CD4-positive, alpha-beta T cell (primary cell): ENCODE measurements at regions of chr1 and their contacts with region 1.

Region 1: GRCh38 chr1:185670187-185670627 is 64.0 kb upstream of the HMCN1 start:
- DNase-seq: peak; percentile 40 to 78 (median 54)
- ATAC-seq: peak; percentile 77
- H3K4me3 ChIP-seq: no peak overlapping the region
- H3K4me3 Mint-ChIP-seq: no peak overlapping the region
- H3K27ac ChIP-seq: no peak overlapping the region
- H3K27ac Mint-ChIP-seq: peak overlapping the region; percentile 55
- H3K4me1 ChIP-seq: peaks cover 14% of the 10 kb centered on the region
- H3K4me1 Mint-ChIP-seq: peaks cover 47% of the 10 kb centered on the region
- H3K27me3 ChIP-seq: no peaks in the 10 kb centered on the region
- H3K27me3 Mint-ChIP-seq: no peaks in the 10 kb centered on the region
- CTCF ChIP-seq: peak; percentile 71

Region 2: DNA sequence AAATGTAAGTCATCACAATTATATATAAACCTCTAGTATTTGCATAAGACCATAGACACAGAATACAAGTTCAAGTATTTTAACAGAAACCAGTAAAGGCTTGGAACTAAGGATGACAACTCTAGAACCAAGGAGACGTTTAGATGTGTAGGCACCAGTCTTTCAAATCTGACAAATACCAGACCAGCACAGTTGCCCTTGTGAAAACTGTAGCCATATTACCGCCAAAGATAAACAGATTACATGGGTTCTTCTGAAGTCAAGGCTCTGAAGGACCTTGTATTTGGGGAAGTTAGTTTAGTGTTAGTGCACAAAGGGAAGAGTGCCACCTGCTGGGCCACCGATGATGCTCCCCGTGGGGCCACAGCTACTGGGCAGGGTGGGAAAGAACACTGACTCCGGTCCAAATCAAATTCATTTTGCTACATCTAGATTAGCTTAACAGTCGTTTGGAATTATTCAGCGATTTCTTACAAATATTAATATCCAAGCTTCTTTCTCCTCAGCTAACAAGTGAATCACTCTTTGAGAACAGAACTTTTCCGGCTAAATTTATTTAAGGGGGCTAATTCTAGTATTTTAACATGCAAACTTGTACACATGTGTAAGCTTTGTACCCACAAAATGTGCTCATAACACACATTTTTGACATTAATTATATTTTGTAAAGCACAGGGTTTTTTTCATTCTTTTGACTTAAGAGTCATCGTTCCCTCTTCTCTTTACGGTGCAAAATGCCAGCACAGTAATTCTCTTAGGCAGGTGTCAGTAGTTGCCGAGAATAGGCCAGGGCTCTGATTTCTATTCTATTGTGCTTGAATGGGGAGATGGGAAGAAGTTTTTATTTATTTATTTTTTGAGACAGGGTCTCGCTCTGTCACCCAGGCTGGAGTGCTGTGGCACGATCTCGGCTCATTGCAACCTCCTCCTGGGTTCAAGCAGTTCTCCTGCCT is 687.9 kb before region 1 on chr1:
- CTCF ChIA-PET with region 1: no interaction called
- POLR2A ChIA-PET with region 1: no interaction called
- intact Hi-C with region 1: no loop called
- DNase-seq: peak; percentile 56 to 87 (median 66)
- ATAC-seq: peak; percentile 96
- H3K4me3 ChIP-seq: no peak overlapping the region
- H3K4me3 Mint-ChIP-seq: no peak overlapping the region
- H3K27ac ChIP-seq: no peak overlapping the region
- H3K27ac Mint-ChIP-seq: no peak overlapping the region
- H3K4me1 ChIP-seq: peaks cover 3% of the 10 kb centered on the region
- H3K4me1 Mint-ChIP-seq: no peaks in the 10 kb centered on the region
- H3K27me3 ChIP-seq: peaks cover 0 to 3% of the 10 kb centered on the region in 2 experiments
- H3K27me3 Mint-ChIP-seq: peaks cover 4% of the 10 kb centered on the region
- CTCF ChIP-seq: peak; percentile 89

Region 3: DNA sequence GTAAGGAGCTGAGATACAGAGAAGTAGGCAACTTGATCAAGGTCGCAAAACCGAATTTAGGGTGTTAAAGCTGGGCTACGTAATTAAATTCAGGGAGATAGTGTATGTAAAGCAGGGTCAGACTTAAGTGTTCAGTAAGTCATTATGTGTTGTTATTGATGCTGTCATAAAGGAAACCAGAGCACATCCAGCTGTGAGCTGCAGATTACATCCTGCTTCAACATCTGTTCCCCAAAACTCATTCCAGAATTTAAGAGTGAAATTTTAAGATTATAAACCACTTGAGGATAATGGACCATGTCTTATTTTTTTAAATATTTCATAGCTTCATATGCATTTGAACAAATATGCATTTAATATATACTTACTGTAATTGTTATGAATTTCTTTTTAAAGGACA is 402.9 kb before region 1 on chr1:
- CTCF ChIA-PET with region 1: no interaction called
- POLR2A ChIA-PET with region 1: no interaction called
- intact Hi-C with region 1: no loop called
- DNase-seq: no peak
- ATAC-seq: no peak
- H3K4me3 ChIP-seq: no peak overlapping the region
- H3K4me3 Mint-ChIP-seq: no peak overlapping the region
- H3K27ac ChIP-seq: no peak overlapping the region
- H3K27ac Mint-ChIP-seq: no peak overlapping the region
- H3K4me1 ChIP-seq: no peaks in the 10 kb centered on the region
- H3K4me1 Mint-ChIP-seq: no peaks in the 10 kb centered on the region
- H3K27me3 ChIP-seq: no peaks in the 10 kb centered on the region
- H3K27me3 Mint-ChIP-seq: no peaks in the 10 kb centered on the region
- CTCF ChIP-seq: no peak

Region 4: GRCh38 chr1:185404291-185404690 is 265.9 kb before region 1 on chr1:
- CTCF ChIA-PET with region 1: no interaction called
- POLR2A ChIA-PET with region 1: no interaction called
- intact Hi-C with region 1: no loop called
- DNase-seq: no peak
- ATAC-seq: no peak
- H3K4me3 ChIP-seq: peak overlapping the region; percentile 17
- H3K4me3 Mint-ChIP-seq: no peak overlapping the region
- H3K27ac ChIP-seq: no peak overlapping the region
- H3K27ac Mint-ChIP-seq: no peak overlapping the region
- H3K4me1 ChIP-seq: peaks cover 2% of the 10 kb centered on the region
- H3K4me1 Mint-ChIP-seq: no peaks in the 10 kb centered on the region
- H3K27me3 ChIP-seq: no peaks in the 10 kb centered on the region
- H3K27me3 Mint-ChIP-seq: no peaks in the 10 kb centered on the region
- CTCF ChIP-seq: no peak

Region 5: GRCh38 chr1:185463011-185463410 is 207.2 kb before region 1 on chr1:
- CTCF ChIA-PET with region 1: no interaction called
- POLR2A ChIA-PET with region 1: no interaction called
- intact Hi-C with region 1: no loop called
- DNase-seq: no peak
- ATAC-seq: no peak
- H3K4me3 ChIP-seq: no peak overlapping the region
- H3K4me3 Mint-ChIP-seq: no peak overlapping the region
- H3K27ac ChIP-seq: no peak overlapping the region
- H3K27ac Mint-ChIP-seq: no peak overlapping the region
- H3K4me1 ChIP-seq: no peaks in the 10 kb centered on the region
- H3K4me1 Mint-ChIP-seq: no peaks in the 10 kb centered on the region
- H3K27me3 ChIP-seq: no peaks in the 10 kb centered on the region
- H3K27me3 Mint-ChIP-seq: no peaks in the 10 kb centered on the region
- CTCF ChIP-seq: no peak

Region 6: GRCh38 chr1:185495007-185495406 is 175.2 kb before region 1 on chr1:
- CTCF ChIA-PET with region 1: no interaction called
- POLR2A ChIA-PET with region 1: no interaction called
- intact Hi-C with region 1: loop called in 1 of 2 experiments (anchors 10 kb)
- DNase-seq: no peak
- ATAC-seq: no peak
- H3K4me3 ChIP-seq: no peak overlapping the region
- H3K4me3 Mint-ChIP-seq: no peak overlapping the region
- H3K27ac ChIP-seq: no peak overlapping the region
- H3K27ac Mint-ChIP-seq: no peak overlapping the region
- H3K4me1 ChIP-seq: no peaks in the 10 kb centered on the region
- H3K4me1 Mint-ChIP-seq: no peaks in the 10 kb centered on the region
- H3K27me3 ChIP-seq: no peaks in the 10 kb centered on the region
- H3K27me3 Mint-ChIP-seq: no peaks in the 10 kb centered on the region
- CTCF ChIP-seq: no peak

Region 7: GRCh38 chr1:185566995-185567394 is 103.2 kb before region 1 on chr1:
- CTCF ChIA-PET with region 1: interaction called, 4 read pairs
- POLR2A ChIA-PET with region 1: interaction called, 11 read pairs
- intact Hi-C with region 1: loop called in 1 of 2 experiments (anchors 5 kb)
- DNase-seq: peak in 12 of 14 experiments; percentile 15 to 95 (median 38)
- ATAC-seq: peak; percentile 81
- H3K4me3 ChIP-seq: no peak overlapping the region
- H3K4me3 Mint-ChIP-seq: peak overlapping the region; percentile 74
- H3K27ac ChIP-seq: peak overlapping the region; percentile 88 to 91
- H3K27ac Mint-ChIP-seq: peak overlapping the region; percentile 94
- H3K4me1 ChIP-seq: peaks cover 40% of the 10 kb centered on the region
- H3K4me1 Mint-ChIP-seq: peaks cover 92% of the 10 kb centered on the region
- H3K27me3 ChIP-seq: no peaks in the 10 kb centered on the region
- H3K27me3 Mint-ChIP-seq: no peaks in the 10 kb centered on the region
- CTCF ChIP-seq: no peak

Region 8: GRCh38 chr1:185681034-185681633 is 10.9 kb after region 1 on chr1:
- CTCF ChIA-PET with region 1: interaction called, 31 read pairs
- POLR2A ChIA-PET with region 1: interaction called, 4 read pairs
- intact Hi-C with region 1: no loop called
- DNase-seq: peak in 5 of 14 experiments; percentile 6 to 74 (median 58)
- ATAC-seq: peak; percentile 62
- H3K4me3 ChIP-seq: no peak overlapping the region
- H3K4me3 Mint-ChIP-seq: no peak overlapping the region
- H3K27ac ChIP-seq: no peak overlapping the region
- H3K27ac Mint-ChIP-seq: no peak overlapping the region
- H3K4me1 ChIP-seq: peaks cover 9% of the 10 kb centered on the region
- H3K4me1 Mint-ChIP-seq: peaks cover 33% of the 10 kb centered on the region
- H3K27me3 ChIP-seq: no peaks in the 10 kb centered on the region
- H3K27me3 Mint-ChIP-seq: no peaks in the 10 kb centered on the region
- CTCF ChIP-seq: peak; percentile 73